Right ventricle myocardium superior (tissue), 1 donor: ENCODE measurements at regions of chr14 and their contacts with region 1.

Region 1: GRCh38 chr14:89618811-89619551 is 201.9 kb upstream of the FOXN3 start:
- DNase-seq: peak; percentile 87
- ATAC-seq: peak; percentile 95

Region 2: DNA sequence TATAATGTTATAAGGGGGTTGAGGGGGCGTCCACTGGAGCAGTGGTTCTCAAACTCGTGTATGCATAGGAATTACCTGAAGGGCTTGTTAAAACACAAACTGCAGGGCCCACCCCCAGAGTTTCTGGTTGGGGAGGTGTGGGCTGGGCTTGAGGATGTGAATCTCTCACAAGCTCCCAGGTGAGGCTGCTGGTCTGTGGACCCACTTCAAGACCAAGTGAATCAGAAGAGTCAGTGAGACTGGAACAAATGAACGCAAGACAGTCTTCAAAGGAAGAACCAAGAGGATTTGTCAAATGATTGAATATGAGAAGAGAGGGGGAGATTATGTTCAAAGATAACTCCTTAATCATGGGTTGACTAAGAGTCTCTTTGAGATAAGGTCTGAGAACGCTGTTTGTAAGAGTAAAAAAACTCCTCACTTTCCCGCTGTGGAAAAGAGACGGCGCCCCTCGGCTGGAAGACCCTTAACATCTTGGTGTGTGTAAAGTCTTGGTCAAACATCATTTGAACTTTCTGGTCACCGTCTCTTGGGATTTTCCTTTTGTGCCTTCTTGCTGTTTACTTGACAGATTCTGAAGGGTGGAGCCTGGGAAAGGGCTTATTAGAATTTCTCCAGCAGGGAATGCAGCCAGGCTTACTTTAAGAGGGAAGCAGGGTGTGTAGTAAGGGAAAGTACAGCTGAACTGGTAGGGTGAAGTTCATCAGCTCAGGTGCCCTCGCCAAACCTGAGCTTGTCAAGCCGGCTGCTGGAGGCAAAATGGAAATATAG is 196.6 kb before region 1 on chr14:
- intact Hi-C with region 1: loop called (anchors 5 kb)
- DNase-seq: no peak
- ATAC-seq: no peak

Region 3: DNA sequence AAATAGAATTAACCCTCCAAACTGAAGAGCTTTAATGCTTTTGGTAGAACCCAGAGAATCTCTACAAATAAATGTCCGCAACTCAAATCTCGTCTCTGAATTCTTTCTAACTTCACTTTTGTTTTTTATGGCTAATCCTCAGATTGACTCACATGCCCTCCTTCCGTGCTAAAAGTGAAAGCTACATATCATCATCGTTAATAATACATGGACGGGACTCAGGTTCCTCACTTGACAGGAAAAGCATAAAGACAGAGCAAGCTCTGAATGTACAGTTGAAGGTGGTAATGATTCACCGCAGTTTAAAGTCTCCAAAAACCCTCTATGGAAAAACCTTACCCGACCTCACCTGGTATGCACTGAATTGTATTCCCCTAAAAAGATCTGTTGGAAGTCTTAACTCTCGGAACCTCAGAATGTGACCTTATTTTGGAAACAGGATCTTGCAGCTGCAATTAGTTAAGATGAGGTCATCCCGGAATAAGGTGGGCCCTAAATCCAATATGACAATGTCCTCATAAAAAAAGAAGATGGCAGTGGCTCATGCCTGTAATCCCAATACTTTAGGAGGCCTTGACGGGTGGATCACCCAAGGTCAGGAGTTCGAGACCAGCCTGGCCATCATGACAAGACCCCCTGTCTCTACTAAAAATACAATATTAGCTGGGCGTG is 54.6 kb before region 1 on chr14:
- intact Hi-C with region 1: no loop called
- DNase-seq: no peak
- ATAC-seq: no peak

Region 4: GRCh38 chr14:89755816-89756215 is 136.8 kb after region 1 on chr14:
- intact Hi-C with region 1: no loop called
- DNase-seq: peak; percentile 86
- ATAC-seq: peak; percentile 93